Ovary (tissue), 10 donors: ENCODE measurements at regions of chr9 and their contacts with region 1.

Region 1: DNA sequence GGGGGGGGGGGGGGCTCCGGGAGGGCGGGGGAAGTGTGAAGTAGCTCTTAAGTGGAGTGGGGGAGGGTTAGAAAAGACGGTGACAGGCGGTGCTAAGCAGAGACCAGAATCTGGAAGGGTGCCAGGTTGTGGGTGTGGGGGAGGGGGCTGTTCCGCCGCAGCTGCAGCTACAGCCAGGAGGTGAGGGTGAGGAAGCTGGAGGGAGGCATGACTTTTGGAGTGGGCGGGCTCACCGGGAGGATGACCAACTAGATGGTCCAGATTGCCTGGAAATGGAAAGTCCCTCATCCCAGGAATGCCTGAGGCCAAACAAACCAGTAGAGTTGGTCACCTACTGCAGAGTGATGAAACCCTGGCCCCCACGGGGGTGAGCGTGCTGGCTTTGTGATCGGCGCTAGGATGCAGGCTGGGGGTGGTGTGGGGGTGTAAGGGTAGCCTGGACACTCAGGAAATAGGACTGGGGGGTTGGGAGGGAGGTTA is 158.1 kb upstream of the SHB start:
- DNase-seq: peak in 3 of 5 donors; percentile 10 to 50 (median 17)
- H3K4me3 ChIP-seq: no peak overlapping the region
- H3K27ac ChIP-seq: no peak overlapping the region
- H3K4me1 ChIP-seq: no peaks in the 10 kb centered on the region
- H3K27me3 ChIP-seq: no peaks in the 10 kb centered on the region
- CTCF ChIP-seq: no peak
- EP300 ChIP-seq: no peak
- POLR2A ChIP-seq: no peak

Region 2: GRCh38 chr9:38164659-38165221 is 62.4 kb before region 1 on chr9:
- intact Hi-C with region 1: loop called in 1 of 4 experiments (anchors 5 kb)
- DNase-seq: no peak
- H3K4me3 ChIP-seq: no peak overlapping the region
- H3K27ac ChIP-seq: no peak overlapping the region
- H3K4me1 ChIP-seq: no peaks in the 10 kb centered on the region
- H3K27me3 ChIP-seq: no peaks in the 10 kb centered on the region
- CTCF ChIP-seq: no peak
- EP300 ChIP-seq: no peak
- POLR2A ChIP-seq: no peak

Region 3: GRCh38 chr9:38277601-38278200 is 50.6 kb after region 1 on chr9:
- intact Hi-C with region 1: loop called in 1 of 4 experiments (anchors 10 kb)
- DNase-seq: no peak
- H3K4me3 ChIP-seq: no peak overlapping the region
- H3K27ac ChIP-seq: no peak overlapping the region
- H3K4me1 ChIP-seq: no peaks in the 10 kb centered on the region
- H3K27me3 ChIP-seq: no peaks in the 10 kb centered on the region
- CTCF ChIP-seq: no peak
- EP300 ChIP-seq: no peak
- POLR2A ChIP-seq: no peak